ENCODE measurements at regions of chr1 and their contacts with region 1.

Region 1: DNA sequence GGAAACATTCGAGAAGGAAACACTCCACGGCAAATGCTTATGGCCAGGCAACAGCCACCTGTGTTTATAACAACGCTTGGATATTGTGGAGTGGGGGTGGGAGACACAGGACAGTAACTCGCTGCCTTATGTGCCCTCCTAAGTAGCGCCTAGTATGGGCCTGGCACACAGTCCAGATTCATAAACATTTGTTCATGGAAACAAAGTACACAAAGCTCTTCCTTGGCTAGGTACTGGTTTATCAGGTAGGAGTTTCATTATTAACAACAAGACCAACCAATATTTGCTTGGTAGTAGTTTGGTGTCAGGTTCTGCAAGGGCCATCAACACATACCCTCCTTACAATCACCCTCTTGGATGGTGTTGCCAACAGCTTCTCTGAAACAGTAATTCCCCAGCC is 23.4 kb downstream of the TMCO4 start:
- DNase-seq: no peak

Region 2: DNA sequence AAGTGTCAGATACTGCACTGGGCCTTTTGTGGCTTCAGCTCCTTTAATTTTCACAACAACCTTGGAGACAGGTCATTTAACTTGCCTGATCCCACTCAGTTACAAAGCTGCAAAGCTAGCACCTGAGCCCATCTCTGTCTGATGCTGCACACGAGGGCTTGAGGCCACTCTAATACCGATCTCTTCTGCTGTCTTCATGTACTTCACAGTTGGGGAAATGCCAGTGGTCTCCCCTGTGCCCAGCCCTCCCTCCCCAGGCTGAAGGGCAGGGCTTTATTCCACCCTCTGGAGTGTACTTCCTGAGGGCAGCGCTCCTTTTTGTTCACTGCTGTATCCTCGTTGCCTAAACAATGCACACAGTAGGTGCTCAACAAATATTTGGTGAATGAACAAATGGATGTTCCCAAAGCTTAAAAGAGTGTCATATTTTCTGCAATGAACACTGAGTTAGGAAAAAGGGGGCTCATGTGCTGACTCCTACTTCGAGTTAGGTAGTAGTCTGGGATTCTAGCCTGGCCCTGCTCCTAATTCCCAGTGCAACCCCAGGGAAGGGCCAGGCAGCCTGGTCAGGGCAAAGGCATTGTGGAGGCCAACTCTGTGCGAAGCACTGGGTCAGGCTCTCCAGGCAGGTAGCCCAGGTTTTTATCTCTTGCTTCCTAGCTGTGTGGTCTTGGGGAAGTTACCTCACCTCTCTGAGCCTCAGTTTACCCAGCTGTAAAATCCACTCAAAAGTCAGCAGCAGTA is 22.4 kb after region 1 on chr1:
- intact Hi-C with region 1: loop called in 1 of 2 experiments (anchors 1 kb)
- DNase-seq: peak; percentile 30

Region 3: DNA sequence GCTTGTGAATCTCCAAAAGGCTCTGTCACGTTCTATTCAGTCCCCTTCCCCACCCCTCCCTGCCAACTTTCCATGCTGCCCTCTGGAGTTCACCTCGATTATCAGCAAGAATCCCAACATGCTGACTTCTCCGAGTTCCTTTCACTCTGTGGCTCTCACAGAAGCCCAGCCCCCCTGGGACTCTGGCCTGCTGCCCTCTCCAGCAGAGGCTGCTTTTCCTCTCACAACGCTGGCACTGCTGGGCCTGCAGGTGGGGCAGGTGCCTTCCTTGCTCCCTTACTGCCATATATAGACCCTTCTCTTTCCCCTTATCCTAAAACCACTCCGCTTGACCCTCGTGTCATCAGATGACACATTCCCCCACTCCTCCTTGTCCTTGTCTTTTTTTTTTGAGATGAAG is 49.0 kb after region 1 on chr1:
- intact Hi-C with region 1: no loop called
- DNase-seq: peak; percentile 42

Measured in posterior vena cava (tissue), 2 donors.